OCI-LY7 (cell line): ENCODE measurements at regions of chr10 and their contacts with region 1.

Region 1: GRCh38 chr10:42680267-42680666 is 41.9 kb upstream of the ZNF33B start:
- DNase-seq: no peak
- H3K4me3 ChIP-seq: no peak overlapping the region
- H3K27ac ChIP-seq: no peak overlapping the region
- H3K4me1 ChIP-seq: no peaks in the 10 kb centered on the region
- CTCF ChIP-seq: no peak

Region 2: GRCh38 chr10:42380926-42381547 is 299.2 kb before region 1 on chr10:
- CTCF ChIA-PET with region 1: no interaction called
- POLR2A ChIA-PET with region 1: no interaction called
- intact Hi-C with region 1: loop called (anchors 10 kb)
- DNase-seq: no peak
- H3K4me3 ChIP-seq: no peak overlapping the region
- H3K27ac ChIP-seq: no peak overlapping the region
- H3K4me1 ChIP-seq: no peaks in the 10 kb centered on the region
- CTCF ChIP-seq: no peak

Region 3: DNA sequence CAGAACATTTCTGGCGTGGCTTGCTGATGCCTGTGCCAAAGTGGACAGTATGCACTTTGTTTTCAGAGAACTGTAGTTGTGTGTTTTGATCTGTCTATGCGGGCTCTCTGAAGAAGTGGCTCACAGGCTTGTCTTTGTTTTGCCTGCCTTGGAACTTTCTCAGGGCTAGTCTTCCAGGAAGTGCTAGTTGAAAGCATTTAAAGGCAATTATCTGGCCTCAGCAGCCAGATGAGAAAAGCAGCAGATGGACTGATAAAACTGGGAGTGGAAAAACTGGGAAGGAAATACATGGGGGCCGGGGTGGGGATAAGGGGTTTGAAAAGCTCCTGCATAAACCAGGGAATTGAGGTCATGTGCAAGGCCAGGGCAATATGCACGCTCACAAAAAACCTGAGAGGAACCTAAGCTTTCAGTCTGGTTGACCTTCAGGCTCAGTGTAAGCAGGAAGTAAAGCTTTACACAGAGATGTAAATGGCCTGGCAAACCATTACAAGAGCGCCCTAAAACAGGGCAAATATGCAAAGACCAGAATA is 136.4 kb before region 1 on chr10:
- CTCF ChIA-PET with region 1: no interaction called
- POLR2A ChIA-PET with region 1: no interaction called
- intact Hi-C with region 1: no loop called
- DNase-seq: no peak
- H3K4me3 ChIP-seq: no peak overlapping the region
- H3K27ac ChIP-seq: no peak overlapping the region
- H3K4me1 ChIP-seq: no peaks in the 10 kb centered on the region
- CTCF ChIP-seq: no peak

Region 4: GRCh38 chr10:43913676-43914385 is 1233.6 kb after region 1 on chr10:
- CTCF ChIA-PET with region 1: no interaction called
- POLR2A ChIA-PET with region 1: no interaction called
- intact Hi-C with region 1: no loop called
- DNase-seq: peak; percentile 8
- H3K4me3 ChIP-seq: no peak overlapping the region
- H3K27ac ChIP-seq: no peak overlapping the region
- H3K4me1 ChIP-seq: peaks cover 6% of the 10 kb centered on the region
- CTCF ChIP-seq: no peak